ENCODE measurements at regions of chr5 and their contacts with region 1.

Region 1: GRCh38 chr5:118987988-118988865 is at the start of gene DTWD2:
- DNase-seq: peak; percentile 96
- ATAC-seq: peak; percentile 99
- total RNA-seq, gene DTWD2: 11.8 TPM

Region 2: DNA sequence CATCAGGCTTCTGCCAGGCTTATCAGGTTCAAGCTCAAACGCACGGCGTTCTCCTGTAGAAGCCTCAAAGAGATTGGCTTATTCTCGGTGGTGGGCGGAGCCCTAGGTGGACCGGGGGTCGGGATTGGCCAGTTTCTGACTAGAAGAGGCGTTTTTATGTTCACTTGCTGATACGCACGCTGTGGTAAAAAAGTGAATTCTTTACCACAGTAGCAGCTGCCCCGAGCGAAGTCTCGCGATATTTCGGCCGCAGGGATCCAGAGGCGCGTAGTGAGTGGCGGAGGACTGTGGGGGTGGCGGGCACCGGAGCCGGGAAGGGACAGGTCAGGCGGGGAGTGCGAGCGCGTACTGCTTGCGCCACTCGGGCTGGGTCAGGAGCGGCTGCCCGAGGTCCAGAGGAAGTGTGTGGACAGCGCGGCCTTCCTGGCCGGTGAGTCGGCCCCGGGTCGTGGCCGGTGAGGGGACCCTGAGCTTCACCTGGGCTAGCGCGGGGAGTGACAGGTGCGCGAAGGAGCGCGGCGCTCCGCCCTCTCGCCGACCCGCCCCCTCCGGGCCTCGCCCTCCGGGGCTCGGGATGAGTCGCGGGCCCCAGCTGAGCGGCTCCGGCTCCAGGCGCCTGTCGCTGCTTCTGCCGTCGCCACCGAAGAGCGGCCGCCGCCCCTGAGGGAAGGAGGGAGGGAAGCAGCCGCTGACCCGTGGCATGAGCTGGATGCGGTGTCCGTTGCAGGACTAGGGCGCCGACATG is 82.8 kb after region 1 on chr5 and contains the start of gene DMXL1:
- intact Hi-C with region 1: loop called (anchors 2 kb)
- DNase-seq: peak; percentile 100
- ATAC-seq: peak; percentile 98
- total RNA-seq, gene DMXL1: 23.3 TPM

Region 3: DNA sequence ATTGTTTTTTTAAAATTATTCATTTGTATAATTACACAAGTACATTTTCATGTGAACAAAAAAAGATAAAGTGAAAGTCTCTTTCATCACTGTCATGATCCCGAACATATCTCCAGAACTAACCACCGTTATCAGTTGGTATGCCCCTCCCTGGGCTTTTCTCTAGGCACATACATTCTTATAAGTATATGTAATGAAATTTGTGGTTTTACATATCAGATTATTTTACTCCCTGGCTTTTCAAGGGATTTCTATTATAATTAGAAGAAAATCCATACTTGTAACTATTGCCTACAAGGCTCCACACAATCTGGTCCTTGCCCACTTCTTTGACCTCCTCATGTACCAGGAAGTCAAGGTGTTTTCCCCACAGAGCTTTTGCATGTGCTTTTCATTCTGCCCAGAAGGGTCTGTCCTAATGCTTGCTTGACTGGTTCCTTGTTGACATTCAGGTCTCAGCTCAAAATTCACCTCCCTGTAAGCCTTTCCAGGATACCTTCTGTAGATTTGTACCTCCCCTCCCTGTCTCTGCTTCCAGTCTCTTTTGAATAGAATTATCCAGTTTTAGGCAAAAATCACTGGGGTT is 430.4 kb after region 1 on chr5:
- intact Hi-C with region 1: loop called (anchors 5 kb)
- DNase-seq: no peak
- ATAC-seq: no peak